PC-9 (cell line): ENCODE measurements at regions of chr7 and their contacts with region 1.

Region 1: GRCh38 chr7:1555809-1556540 is at the start of gene TMEM184A:
- DNase-seq: peak; percentile 98 to 100
- H3K4me3 ChIP-seq: peak within 1 kb of the TSS; percentile 65
- H3K27ac ChIP-seq: peak within 1 kb of the TSS; percentile 96
- H3K4me1 ChIP-seq: peaks cover 62% of the 10 kb centered on the region
- H3K27me3 ChIP-seq: no peaks in the 10 kb centered on the region
- CTCF ChIP-seq: peak; percentile 80
- total RNA-seq, gene TMEM184A: 21.4 TPM in 2 replicates

Region 2: DNA sequence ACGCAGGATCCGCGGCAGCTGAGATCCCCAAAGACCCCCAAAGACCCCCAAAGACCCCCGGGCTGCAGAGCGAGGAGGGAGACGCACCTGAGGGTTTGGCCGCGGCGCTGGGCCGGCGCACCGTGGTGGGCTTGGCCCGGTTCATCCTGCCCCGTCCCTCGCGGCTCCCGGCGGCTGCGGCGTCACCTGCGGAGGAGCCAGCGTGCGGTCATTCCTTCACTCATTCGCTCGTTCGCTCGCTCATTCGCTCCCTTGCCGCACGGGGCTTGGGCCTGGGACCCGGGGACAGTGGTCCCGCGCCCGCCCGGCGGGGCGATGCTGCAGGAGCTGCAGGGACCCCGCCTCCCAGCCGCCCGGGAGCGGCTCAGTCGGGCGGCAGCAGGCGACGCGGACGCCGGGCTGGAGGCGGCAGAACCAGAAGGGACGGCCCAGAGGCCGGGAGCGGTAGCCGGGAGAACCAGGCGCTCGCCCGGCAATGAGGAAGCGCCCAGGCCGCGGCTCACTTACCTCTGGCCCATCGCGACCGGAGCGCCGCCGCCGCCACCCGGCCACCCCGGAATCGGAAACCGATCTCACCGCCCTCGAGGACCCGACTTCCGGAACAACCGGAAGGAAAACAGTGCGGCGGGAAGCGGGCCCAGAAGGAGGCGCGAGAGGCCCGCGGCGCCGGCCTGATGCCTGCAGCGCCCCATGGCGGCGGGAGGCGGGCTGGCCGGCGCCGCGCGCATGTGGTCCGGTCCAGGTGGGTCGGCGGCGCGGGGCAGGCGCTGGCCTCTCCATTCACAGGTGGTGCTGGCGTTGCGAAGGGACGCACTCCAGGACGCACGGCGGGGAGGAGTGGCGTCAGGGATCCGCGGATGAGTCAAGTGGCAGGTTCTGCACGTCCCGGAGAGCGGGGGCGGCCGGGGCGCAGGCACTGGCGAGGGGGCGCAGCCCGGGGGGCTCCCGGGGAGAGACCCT is 51.9 kb before region 1 on chr7 and contains the start of gene INTS1:
- CTCF ChIA-PET with region 1: interaction called, 12 read pairs
- POLR2A ChIA-PET with region 1: interaction called, 3 read pairs
- intact Hi-C with region 1: loop called (anchors 1 kb)
- DNase-seq: peak; percentile 90 to 99
- H3K4me3 ChIP-seq: peak within 1 kb of the TSS; percentile 99
- H3K27ac ChIP-seq: peak within 1 kb of the TSS; percentile 45
- H3K4me1 ChIP-seq: peaks cover 33% of the 10 kb centered on the region
- H3K27me3 ChIP-seq: no peaks in the 10 kb centered on the region
- CTCF ChIP-seq: peak; percentile 70
- total RNA-seq, gene INTS1: 124 and 170 TPM in 2 replicates

Region 3: GRCh38 chr7:1532483-1533424 is 23.2 kb before region 1 on chr7:
- CTCF ChIA-PET with region 1: interaction called, 7 read pairs
- POLR2A ChIA-PET with region 1: interaction called, 13 read pairs
- intact Hi-C with region 1: loop called (anchors 1 kb)
- DNase-seq: peak; percentile 88 to 97
- H3K4me3 ChIP-seq: peak overlapping the region; percentile 64
- H3K27ac ChIP-seq: peak overlapping the region; percentile 89
- H3K4me1 ChIP-seq: peaks cover 52% of the 10 kb centered on the region
- H3K27me3 ChIP-seq: no peaks in the 10 kb centered on the region
- CTCF ChIP-seq: no peak

Region 4: GRCh38 chr7:1569833-1570633 is 14.1 kb after region 1 on chr7 and contains the start of gene PSMG3:
- CTCF ChIA-PET with region 1: interaction called, 4 read pairs
- POLR2A ChIA-PET with region 1: interaction called, 5 read pairs
- intact Hi-C with region 1: loop called (anchors 1 kb)
- DNase-seq: peak; percentile 80 to 93
- H3K4me3 ChIP-seq: peak within 1 kb of the TSS; percentile 97
- H3K27ac ChIP-seq: peak within 1 kb of the TSS; percentile 65
- H3K4me1 ChIP-seq: peaks cover 34% of the 10 kb centered on the region
- H3K27me3 ChIP-seq: no peaks in the 10 kb centered on the region
- CTCF ChIP-seq: peak; percentile 44; the same call in 1 of the 2 replicates
- total RNA-seq, gene PSMG3: 63.3 and 78.9 TPM in 2 replicates